ENCODE measurements at regions of chr10 and their contacts with region 1.

Region 1: DNA sequence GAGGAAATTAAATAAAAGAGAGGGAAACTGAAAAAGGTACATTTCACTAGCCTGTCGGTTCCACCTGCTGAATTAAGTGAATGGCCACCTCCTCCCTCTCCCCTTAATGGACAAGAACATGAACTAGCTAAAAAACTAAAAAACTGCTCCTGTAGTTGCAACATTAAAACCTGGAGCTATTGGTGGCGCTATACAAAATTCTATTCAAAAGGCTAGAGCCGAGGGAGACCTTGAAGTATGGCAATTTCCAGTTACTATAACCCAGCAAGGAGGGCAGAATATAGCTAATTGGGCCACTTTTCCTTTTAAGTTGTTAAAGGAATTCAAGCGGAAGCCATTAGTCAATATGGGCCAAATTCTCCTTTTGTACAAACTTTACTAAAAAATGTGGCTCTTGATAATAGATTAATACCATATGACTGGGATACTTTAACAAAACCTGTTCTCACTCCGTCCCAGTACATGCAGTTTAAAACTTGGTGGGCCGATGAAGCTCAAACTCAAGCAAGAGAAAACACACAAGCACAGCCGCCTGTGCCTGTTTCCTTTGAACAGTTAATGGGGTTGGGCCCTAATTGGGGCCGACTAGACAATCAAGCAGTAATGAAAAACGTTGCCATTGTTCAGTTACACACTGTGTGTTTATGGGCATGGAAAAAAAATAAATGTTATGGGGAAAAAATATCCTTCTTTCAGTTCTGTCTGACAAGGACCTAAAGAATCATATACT is 6.5 kb upstream of the CHST3 start:
- DNase-seq: no peak
- H3K4me3 Mint-ChIP-seq: no peak overlapping the region
- H3K27ac Mint-ChIP-seq: no peak overlapping the region
- H3K4me1 Mint-ChIP-seq: no peaks in the 10 kb centered on the region
- H3K27me3 Mint-ChIP-seq: peaks cover 21% of the 10 kb centered on the region

Region 2: GRCh38 chr10:71945819-71946474 is 11.8 kb before region 1 on chr10:
- CTCF ChIA-PET with region 1: interaction called, 10 read pairs
- DNase-seq: no peak
- H3K4me3 Mint-ChIP-seq: no peak overlapping the region
- H3K27ac Mint-ChIP-seq: no peak overlapping the region
- H3K4me1 Mint-ChIP-seq: no peaks in the 10 kb centered on the region
- H3K27me3 Mint-ChIP-seq: peaks cover 10% of the 10 kb centered on the region

Region 3: GRCh38 chr10:72126184-72126871 is 168.6 kb after region 1 on chr10:
- CTCF ChIA-PET with region 1: no interaction called
- DNase-seq: no peak
- H3K4me3 Mint-ChIP-seq: no peak overlapping the region
- H3K27ac Mint-ChIP-seq: no peak overlapping the region
- H3K4me1 Mint-ChIP-seq: peaks cover 34% of the 10 kb centered on the region
- H3K27me3 Mint-ChIP-seq: no peaks in the 10 kb centered on the region

Measured in activated naive CD4-positive, alpha-beta T cell treated with anti-CD3 and anti-CD28 coated beads, Interleukin-2, amount 10 ng/mL, durations not matched to agents 7 days and 5 days (primary cell).